BJ (cell line): ENCODE measurements at regions of chr2 and their contacts with region 1.

Region 1: DNA sequence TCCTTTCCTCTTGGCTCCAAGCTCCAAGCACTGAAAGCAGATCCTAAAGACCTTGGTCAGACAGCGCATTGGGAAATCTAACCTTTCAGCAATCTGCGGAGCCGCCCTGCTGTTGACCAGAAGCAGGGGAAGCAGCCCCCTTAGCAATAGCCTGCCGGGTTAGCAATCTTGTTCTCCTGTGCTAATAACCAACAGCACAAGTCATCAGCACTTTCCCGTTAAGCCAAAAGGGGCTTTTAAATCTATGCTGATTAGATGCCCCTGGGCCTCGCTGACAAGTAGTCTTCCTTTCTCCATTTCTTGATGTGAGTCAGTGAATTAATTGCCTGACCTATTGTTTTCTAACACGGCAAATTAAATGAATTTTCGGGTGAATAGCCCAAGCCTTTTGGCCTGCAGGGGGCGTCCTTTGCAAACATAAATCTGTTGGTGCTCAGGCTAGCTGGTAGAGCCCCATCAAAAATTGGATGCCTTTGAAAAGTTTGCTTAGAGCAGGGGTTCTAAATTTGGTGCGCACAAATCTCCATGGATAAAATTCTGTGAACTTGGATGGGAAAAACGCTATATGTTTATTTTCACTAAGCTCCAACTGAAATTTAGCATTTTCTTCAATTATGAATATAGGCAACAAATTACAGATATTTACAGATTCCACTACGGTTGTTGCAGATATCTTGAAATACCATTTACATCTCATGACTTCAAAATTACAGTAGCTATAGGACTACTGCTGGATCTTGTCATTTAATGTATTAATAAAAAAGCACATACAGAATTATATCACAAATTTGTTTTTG is 24.6 kb downstream of the MAIP1 start:
- DNase-seq: no peak
- H3K4me3 ChIP-seq: no peak overlapping the region
- H3K27me3 ChIP-seq: no peaks in the 10 kb centered on the region
- CTCF ChIP-seq: peak; percentile 75

Region 2: DNA sequence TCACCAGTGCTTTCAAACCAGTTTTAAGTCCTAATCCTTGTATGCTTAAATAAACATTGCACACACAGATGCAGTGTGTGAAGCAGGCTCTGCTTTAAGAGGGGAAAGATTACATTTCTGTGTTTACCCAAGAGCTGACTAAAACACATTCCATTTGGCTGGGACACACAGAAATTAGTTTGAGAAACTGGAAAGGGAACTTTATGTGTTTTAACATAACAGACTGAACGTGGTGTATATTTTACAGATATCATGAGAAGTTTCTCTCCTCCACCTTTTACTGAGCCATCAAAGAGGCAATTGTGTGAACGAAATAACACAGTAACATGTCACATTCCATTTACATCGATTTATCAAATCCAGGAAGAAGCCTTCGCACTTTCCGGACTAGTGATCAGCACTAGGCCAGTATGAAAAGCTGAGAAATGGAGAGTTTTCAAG is 97.2 kb after region 1 on chr2:
- CTCF ChIA-PET with region 1: no interaction called
- POLR2A ChIA-PET with region 1: no interaction called
- DNase-seq: peak; percentile 44
- H3K4me3 ChIP-seq: no peak overlapping the region
- H3K27me3 ChIP-seq: no peaks in the 10 kb centered on the region
- CTCF ChIP-seq: no peak

Region 3: GRCh38 chr2:200199576-200200263 is 219.7 kb after region 1 on chr2:
- CTCF ChIA-PET with region 1: no interaction called
- POLR2A ChIA-PET with region 1: no interaction called
- DNase-seq: no peak
- H3K4me3 ChIP-seq: no peak overlapping the region
- H3K27me3 ChIP-seq: peaks cover 4% of the 10 kb centered on the region
- CTCF ChIP-seq: no peak

Region 4: DNA sequence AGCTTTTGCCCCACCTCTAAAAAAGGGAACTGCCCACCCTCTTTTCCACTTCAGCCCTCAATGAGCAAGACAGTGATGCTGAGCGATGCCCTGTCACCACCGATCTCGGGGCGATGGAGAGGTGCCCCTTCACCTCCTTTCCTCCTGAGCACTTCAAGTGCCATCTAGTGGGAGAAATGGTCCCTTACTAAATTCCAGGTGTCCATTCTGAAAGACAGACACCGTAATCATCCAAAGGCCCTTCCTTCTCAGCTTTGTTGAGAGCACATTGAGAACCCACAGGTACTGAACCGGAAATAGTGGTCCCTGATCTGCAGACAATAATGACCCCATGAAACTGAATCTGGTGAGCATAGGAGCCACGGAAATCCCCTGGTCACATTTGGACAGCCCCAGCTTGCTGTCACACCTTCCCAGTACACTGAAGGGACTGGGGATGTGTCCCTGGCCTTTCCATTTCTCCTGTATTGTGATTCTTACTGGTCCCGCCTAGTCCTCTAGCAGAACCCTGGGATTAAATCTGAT is 491.4 kb after region 1 on chr2:
- CTCF ChIA-PET with region 1: interaction called, 12 read pairs
- POLR2A ChIA-PET with region 1: no interaction called
- DNase-seq: no peak
- H3K4me3 ChIP-seq: no peak overlapping the region
- H3K27me3 ChIP-seq: no peaks in the 10 kb centered on the region
- CTCF ChIP-seq: peak; percentile 52

Region 5: DNA sequence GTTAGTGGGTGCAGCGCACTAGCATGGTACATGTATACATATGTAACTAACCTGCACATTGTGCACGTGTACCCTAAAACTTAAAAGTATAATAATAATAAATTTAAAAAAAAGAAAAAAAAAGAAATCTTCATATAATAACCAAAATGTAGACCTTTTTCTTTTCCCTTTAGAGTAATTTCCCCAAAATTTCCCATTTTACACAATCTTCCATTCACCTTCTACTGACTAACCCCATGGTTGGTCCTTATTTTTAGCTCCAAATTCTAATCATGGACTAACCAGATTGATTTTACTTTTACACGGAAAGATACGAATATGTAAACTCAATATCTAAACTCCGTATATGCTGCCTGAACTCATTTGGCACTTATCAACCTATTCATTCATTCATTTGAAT is 522.2 kb after region 1 on chr2:
- CTCF ChIA-PET with region 1: no interaction called
- POLR2A ChIA-PET with region 1: no interaction called
- DNase-seq: no peak
- H3K4me3 ChIP-seq: no peak overlapping the region
- H3K27me3 ChIP-seq: no peaks in the 10 kb centered on the region
- CTCF ChIP-seq: no peak